Esophagus squamous epithelium (tissue), 5 donors: ENCODE measurements at regions of chrX and their contacts with region 1.

Region 1: GRCh38 chrX:13487731-13488523 is 81.5 kb upstream of the EGFL6 start:
- DNase-seq: no peak
- H3K4me3 ChIP-seq: no peak overlapping the region
- H3K27ac ChIP-seq: peak overlapping the region; percentile 62 to 83 (median 74)
- H3K4me1 ChIP-seq: peaks cover 0 to 32% (median 16%) of the 10 kb centered on the region in 3 donors
- H3K27me3 ChIP-seq: no peaks in the 10 kb centered on the region
- CTCF ChIP-seq: peak; percentile 58 to 80 (median 72)
- POLR2A ChIP-seq: no peak

Region 2: DNA sequence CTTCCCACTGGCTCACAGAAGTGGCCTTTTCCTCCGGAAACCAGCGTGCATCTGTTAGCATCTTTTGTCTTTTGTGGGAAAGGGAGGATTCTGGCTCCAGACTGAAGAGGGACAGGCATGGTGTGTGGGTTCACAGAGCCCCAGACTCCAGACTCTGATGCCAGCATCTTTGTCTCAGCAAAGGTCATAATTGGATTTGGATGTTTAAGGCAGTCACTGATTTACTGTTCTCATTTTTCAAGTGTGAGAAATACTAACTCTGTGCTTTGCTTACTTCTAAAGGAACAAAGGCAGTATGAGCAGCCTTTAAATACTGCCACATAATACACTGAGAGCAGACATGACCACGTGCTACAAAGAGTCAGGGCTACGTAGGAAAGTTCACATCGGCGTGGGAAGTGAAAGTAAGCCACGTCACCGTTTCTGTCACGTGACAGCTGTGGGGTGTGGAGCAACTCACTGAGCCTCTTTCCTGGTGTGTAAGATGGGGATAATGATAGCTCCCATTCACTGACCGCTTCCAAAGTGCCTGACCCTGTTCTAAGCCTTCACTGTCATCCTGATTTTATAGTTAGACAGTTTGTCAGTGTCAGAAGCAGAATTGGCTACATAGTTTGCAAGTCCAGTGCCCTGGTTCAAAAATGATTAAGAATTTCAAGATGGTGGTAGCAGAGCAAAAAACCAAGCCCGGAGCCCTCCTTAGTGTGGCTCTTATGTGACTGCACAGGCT is 537.8 kb before region 1 on chrX:
- intact Hi-C with region 1: loop called (anchors 10 kb)
- DNase-seq: peak; percentile 32
- H3K4me3 ChIP-seq: peak overlapping the region in 1 of 4 donors; percentile 20
- H3K27ac ChIP-seq: peak overlapping the region; percentile 64 to 86 (median 82)
- H3K4me1 ChIP-seq: peaks cover 0 to 51% (median 18%) of the 10 kb centered on the region in 3 donors
- H3K27me3 ChIP-seq: no peaks in the 10 kb centered on the region
- CTCF ChIP-seq: no peak
- POLR2A ChIP-seq: peak in 1 of 4 donors; percentile 47

Region 3: DNA sequence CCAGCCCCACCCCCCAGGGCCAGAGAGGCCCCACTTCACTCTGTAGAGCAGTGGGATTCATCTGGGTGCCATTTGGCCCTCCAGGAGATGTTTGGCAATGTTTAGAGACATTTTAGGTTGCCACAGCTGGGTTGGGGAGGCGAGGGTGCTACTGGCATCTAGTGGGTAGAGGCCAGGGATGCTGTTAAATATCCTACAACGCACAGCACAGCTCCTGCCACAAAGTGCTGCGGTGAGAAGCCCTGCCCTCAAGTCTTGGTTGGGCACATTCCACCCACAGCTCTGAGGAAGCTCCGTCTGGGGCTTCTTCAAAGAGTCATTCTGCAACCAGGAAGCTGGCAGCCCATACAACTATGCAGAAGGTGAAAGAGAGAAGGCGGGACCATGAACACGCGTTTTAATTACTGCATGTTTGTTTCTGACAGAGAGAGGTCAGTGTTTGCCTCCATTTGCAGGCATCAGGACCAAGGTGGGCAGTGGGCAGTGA is 395.4 kb before region 1 on chrX:
- intact Hi-C with region 1: loop called (anchors 10 kb)
- DNase-seq: peak; percentile 9
- H3K4me3 ChIP-seq: no peak overlapping the region
- H3K27ac ChIP-seq: peak overlapping the region; percentile 5 to 77 (median 43)
- H3K4me1 ChIP-seq: peaks cover 0 to 20% (median 0%) of the 10 kb centered on the region in 3 donors
- H3K27me3 ChIP-seq: no peaks in the 10 kb centered on the region
- CTCF ChIP-seq: peak in 2 of 6 experiments; percentile 13 to 18
- POLR2A ChIP-seq: no peak

Region 4: GRCh38 chrX:13411496-13412207 is 76.3 kb before region 1 on chrX:
- intact Hi-C with region 1: no loop called
- DNase-seq: no peak
- H3K4me3 ChIP-seq: no peak overlapping the region
- H3K27ac ChIP-seq: no peak overlapping the region
- H3K4me1 ChIP-seq: no peaks in the 10 kb centered on the region
- H3K27me3 ChIP-seq: no peaks in the 10 kb centered on the region
- CTCF ChIP-seq: no peak
- POLR2A ChIP-seq: no peak

Region 5: DNA sequence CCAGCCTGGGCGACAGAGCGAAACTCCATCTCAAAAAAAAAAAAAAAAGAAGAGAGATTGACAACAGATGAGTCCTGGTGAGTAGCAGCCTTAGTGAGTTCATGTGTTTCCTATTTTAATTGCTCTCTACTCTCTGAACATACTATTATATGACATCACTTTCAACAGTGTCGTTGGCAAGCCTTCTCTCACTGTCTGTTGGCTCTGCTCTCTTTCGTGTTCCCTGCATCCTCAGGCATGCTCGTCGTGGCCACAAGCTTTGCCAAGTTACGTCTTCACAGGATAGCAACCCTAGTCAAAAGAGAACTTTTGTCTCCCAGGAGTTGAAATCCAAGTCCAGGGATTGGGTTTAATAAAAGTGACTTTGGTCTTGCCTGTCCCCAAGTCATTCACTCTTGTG is 35.6 kb before region 1 on chrX:
- intact Hi-C with region 1: no loop called
- DNase-seq: no peak
- H3K4me3 ChIP-seq: no peak overlapping the region
- H3K27ac ChIP-seq: no peak overlapping the region
- H3K4me1 ChIP-seq: no peaks in the 10 kb centered on the region
- H3K27me3 ChIP-seq: no peaks in the 10 kb centered on the region
- CTCF ChIP-seq: no peak
- POLR2A ChIP-seq: no peak